Common myeloid progenitor, CD34-positive (primary cell): ENCODE measurements at regions of chr11 and their contacts with region 1.

Region 1: DNA sequence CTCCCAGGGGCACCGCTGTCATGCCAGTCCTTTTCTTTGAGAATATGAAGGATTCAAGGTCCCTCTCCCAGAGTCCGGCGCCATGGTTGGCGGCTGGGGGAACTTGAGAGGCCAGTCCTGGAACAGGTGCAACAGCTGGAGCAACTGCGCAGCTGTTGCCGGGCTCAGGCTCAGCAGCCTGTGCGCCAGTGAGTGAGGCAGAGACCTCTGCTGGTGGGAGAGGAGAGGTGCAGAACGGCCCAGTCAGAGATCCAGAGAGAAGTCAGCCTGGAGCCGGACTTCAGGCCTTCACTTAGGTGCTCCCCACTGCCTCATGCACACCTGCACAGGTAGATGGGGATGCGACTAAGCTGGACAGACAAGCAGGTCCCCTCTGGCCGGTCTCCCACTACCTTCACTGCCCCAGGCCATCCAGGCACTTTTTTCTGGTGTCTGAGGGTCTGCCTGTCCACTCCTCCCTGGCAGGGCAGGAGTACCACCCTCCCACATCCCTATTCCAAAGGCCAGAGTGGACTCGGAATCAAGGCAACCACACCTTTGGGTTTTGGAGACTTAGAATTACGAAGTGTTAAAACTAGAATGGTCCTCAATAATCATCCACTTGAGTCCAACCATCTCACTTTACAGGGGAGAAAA is 4.6 kb downstream of the CHRDL2 start:
- DNase-seq: peak; percentile 46 to 74 (median 69)
- H3K4me3 ChIP-seq: no peak overlapping the region
- H3K27ac ChIP-seq: no peak overlapping the region
- H3K4me1 ChIP-seq: peaks cover 0 to 6% (median 4%) of the 10 kb centered on the region in 4 experiments
- H3K27me3 ChIP-seq: peaks cover 0 to 38% (median 31%) of the 10 kb centered on the region in 5 experiments

Region 2: GRCh38 chr11:74520927-74521665 is 205.6 kb before region 1 on chr11:
- CTCF ChIA-PET with region 1: no interaction called
- POLR2A ChIA-PET with region 1: no interaction called
- DNase-seq: no peak
- H3K4me3 ChIP-seq: no peak overlapping the region
- H3K27ac ChIP-seq: no peak overlapping the region
- H3K4me1 ChIP-seq: no peaks in the 10 kb centered on the region
- H3K27me3 ChIP-seq: no peaks in the 10 kb centered on the region

Region 3: DNA sequence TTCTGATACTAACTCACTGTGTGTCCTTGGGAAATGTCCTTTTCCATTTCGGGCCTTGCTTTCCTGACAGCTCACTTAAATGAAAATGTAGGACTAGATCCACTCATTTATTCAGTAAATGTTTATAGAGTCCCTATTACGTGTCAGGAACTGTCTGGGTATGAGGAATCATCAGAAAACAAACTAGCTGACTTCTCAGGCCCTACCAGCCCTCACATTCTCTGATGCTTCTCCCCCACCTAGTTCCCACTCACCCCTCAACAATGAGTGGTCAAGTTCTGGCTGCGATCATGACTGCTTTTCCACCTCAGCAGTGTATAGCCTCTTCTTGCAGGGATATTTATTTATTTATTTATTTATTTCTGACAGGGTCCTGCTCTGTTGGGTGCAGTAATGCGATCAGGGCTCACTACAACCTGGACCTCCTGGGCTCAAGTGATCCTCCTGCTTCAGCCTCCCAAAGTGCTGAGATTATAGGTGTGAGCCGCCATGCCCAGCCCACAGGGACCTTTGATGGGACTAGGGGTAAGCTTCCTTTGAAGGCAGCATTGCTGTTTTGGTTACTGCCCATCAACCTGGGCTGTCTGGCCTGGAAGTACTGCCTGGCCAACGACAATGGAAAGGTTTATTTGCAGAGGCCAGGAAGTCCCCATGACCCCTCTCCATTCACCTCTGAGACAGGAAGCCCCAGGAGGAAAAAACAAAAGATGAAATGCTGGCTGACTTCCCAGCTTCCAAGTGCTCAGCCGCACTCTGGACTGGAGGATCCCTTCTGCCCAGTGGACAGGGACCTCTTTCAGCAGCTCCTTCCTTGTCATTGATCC is 167.3 kb before region 1 on chr11:
- CTCF ChIA-PET with region 1: no interaction called
- POLR2A ChIA-PET with region 1: no interaction called
- DNase-seq: no peak
- H3K4me3 ChIP-seq: no peak overlapping the region
- H3K27ac ChIP-seq: no peak overlapping the region
- H3K4me1 ChIP-seq: no peaks in the 10 kb centered on the region
- H3K27me3 ChIP-seq: no peaks in the 10 kb centered on the region

Region 4: GRCh38 chr11:74581954-74582547 is 144.6 kb before region 1 on chr11:
- CTCF ChIA-PET with region 1: no interaction called
- POLR2A ChIA-PET with region 1: no interaction called
- DNase-seq: no peak
- H3K4me3 ChIP-seq: no peak overlapping the region
- H3K27ac ChIP-seq: no peak overlapping the region
- H3K4me1 ChIP-seq: peaks cover 0 to 12% (median 10%) of the 10 kb centered on the region in 4 experiments
- H3K27me3 ChIP-seq: no peaks in the 10 kb centered on the region

Region 5: DNA sequence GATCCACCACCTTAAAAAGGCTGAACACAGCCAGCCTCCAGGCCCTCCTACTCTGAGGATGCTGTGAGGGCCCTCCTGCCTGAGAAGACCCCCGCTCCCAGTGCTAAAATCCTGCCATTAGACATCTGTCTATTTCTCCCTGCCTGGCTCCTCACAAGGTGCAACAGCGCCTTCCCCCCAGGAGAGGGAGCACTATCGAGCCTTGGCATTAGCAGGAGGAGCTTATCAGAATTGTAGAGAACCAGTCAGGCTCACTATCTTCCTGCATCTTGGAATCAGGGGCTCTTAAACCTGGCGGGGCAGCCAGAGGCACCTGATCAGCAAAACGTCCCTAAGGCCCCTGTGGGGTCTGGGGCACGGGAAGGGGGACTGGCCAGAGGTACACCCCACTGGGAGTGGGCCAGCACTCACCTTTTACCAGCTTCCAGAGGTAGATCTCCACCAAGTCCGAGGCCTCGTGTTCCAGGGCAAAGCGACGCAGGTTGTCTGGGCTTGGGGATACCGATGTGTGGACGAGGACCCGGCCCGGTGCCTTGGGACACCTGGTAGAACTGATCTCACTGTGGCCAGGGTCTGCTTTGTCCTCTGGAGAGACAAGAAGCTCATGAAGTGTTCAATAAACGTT is 24.2 kb before region 1 on chr11:
- CTCF ChIA-PET with region 1: interaction called, 27 read pairs
- POLR2A ChIA-PET with region 1: interaction called, 4 read pairs
- DNase-seq: peak; percentile 56 to 73 (median 68)
- H3K4me3 ChIP-seq: no peak overlapping the region
- H3K27ac ChIP-seq: no peak overlapping the region
- H3K4me1 ChIP-seq: no peaks in the 10 kb centered on the region
- H3K27me3 ChIP-seq: no peaks in the 10 kb centered on the region